ENCODE measurements at regions of chr1 and their contacts with region 1.

Region 1: GRCh38 chr1:40257688-40258444 is at the start of gene ZMPSTE24:
- DNase-seq: peak; percentile 98
- H3K4me3 Mint-ChIP-seq: peak within 1 kb of the TSS; percentile 96
- H3K27ac Mint-ChIP-seq: peak within 1 kb of the TSS; percentile 99
- H3K4me1 Mint-ChIP-seq: peaks cover 47% of the 10 kb centered on the region
- H3K27me3 Mint-ChIP-seq: no peaks in the 10 kb centered on the region
- total RNA-seq, gene ZMPSTE24: 23.8 to 25.4 TPM

Region 2: DNA sequence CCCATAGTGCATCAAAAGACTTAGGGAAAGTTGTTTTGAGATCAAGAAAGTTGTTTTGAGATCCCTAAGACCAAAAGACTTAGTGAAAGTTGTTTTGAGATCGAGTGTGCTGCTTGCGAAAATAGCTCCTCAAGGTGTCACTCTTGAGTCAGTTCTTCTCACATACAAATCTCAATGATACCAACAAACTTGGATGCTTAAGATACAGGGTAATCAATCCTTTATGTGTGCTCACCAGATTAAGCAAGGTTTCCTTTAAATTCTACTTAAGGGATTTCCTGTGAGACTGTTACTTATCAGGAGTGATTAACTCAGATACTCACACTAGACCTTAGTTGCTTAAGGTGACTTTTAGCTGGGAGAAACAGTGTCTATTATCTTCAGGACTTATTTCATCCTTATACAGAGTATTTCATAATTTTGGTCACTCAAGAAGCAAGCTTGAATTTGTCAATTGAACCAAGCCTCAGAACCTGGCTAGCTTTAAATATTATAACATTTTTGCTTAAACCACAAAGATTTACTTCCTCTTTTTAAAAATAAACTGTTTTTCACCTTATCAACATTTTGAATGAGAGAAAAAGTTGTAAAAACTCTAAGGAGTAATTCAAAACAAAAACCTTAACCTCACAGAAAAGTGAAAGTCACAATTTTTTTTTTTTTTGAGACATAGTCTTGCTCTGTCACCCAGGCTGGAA is 104.6 kb before region 1 on chr1:
- CTCF ChIA-PET with region 1: interaction called, 10 read pairs
- POLR2A ChIA-PET with region 1: interaction called, 6 read pairs
- DNase-seq: peak; percentile 37
- H3K4me3 Mint-ChIP-seq: no peak overlapping the region
- H3K27ac Mint-ChIP-seq: no peak overlapping the region
- H3K4me1 Mint-ChIP-seq: peaks cover 6% of the 10 kb centered on the region
- H3K27me3 Mint-ChIP-seq: peaks cover 5% of the 10 kb centered on the region

Region 3: GRCh38 chr1:40171036-40171435 is 86.8 kb before region 1 on chr1:
- CTCF ChIA-PET with region 1: no interaction called
- POLR2A ChIA-PET with region 1: no interaction called
- DNase-seq: no peak
- H3K4me3 Mint-ChIP-seq: no peak overlapping the region
- H3K27ac Mint-ChIP-seq: no peak overlapping the region
- H3K4me1 Mint-ChIP-seq: peaks cover 29% of the 10 kb centered on the region
- H3K27me3 Mint-ChIP-seq: no peaks in the 10 kb centered on the region

Region 4: GRCh38 chr1:40232444-40232843 is 25.4 kb before region 1 on chr1:
- CTCF ChIA-PET with region 1: no interaction called
- POLR2A ChIA-PET with region 1: interaction called, 16 read pairs
- DNase-seq: peak; percentile 77
- H3K4me3 Mint-ChIP-seq: no peak overlapping the region
- H3K27ac Mint-ChIP-seq: peak overlapping the region; percentile 42
- H3K4me1 Mint-ChIP-seq: peaks cover 41% of the 10 kb centered on the region
- H3K27me3 Mint-ChIP-seq: no peaks in the 10 kb centered on the region

Region 5: GRCh38 chr1:40241362-40241761 is 16.5 kb before region 1 on chr1:
- CTCF ChIA-PET with region 1: interaction called, 10 read pairs
- POLR2A ChIA-PET with region 1: interaction called, 48 read pairs
- DNase-seq: no peak
- H3K4me3 Mint-ChIP-seq: peak overlapping the region; percentile 1
- H3K27ac Mint-ChIP-seq: peak overlapping the region; percentile 77
- H3K4me1 Mint-ChIP-seq: peaks cover 56% of the 10 kb centered on the region
- H3K27me3 Mint-ChIP-seq: no peaks in the 10 kb centered on the region

Region 6: DNA sequence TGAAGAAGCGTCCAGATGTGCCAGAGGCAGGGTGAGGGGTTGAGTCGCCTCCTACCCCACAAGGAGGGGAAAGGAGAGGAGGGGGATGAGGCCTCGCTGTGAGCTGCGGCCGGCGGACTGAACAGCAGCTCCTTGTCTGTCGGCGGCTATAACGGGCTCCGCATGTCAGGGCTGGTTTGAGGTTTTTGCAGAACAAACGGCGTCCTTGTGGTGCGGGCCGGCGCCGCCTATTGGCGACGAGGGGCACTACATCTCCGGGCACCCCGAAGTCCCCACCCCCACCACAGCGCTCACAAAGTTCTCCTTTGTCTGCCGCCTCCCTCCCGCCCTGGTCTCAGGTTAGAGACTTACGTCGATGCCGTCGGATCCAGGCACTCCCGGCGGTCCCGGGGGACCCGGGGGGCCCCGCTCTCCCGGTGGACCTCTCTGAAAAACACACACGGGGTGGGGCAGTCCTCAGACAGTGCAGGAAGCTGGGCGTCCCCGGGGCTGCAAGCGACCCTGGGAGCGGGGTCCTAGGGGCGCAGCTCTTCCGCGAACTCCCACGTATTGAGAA is 57.5 kb after region 1 on chr1:
- CTCF ChIA-PET with region 1: interaction called, 10 read pairs
- POLR2A ChIA-PET with region 1: interaction called, 5 read pairs
- DNase-seq: peak; percentile 85
- H3K4me3 Mint-ChIP-seq: peak overlapping the region; percentile 66
- H3K27ac Mint-ChIP-seq: no peak overlapping the region
- H3K4me1 Mint-ChIP-seq: peaks cover 59% of the 10 kb centered on the region
- H3K27me3 Mint-ChIP-seq: peaks cover 25% of the 10 kb centered on the region

Region 7: GRCh38 chr1:40373338-40374283 is 115.7 kb after region 1 on chr1 and contains the start of gene SMAP2:
- CTCF ChIA-PET with region 1: no interaction called
- POLR2A ChIA-PET with region 1: interaction called, 18 read pairs
- DNase-seq: peak; percentile 96
- H3K4me3 Mint-ChIP-seq: peak within 1 kb of the TSS; percentile 99
- H3K27ac Mint-ChIP-seq: peak within 1 kb of the TSS; percentile 99
- H3K4me1 Mint-ChIP-seq: peaks cover 49% of the 10 kb centered on the region
- H3K27me3 Mint-ChIP-seq: no peaks in the 10 kb centered on the region
- total RNA-seq, gene SMAP2: 172 to 173 TPM

Measured in activated CD4-positive, alpha-beta memory T cell treated with anti-CD3 and anti-CD28 coated beads, Interleukin-2, amount 10 ng/mL, durations not matched to agents 7 days and 5 days (primary cell).